Mammary epithelial cell (primary cell): ENCODE measurements at regions of chr9 and their contacts with region 1.

Region 1: DNA sequence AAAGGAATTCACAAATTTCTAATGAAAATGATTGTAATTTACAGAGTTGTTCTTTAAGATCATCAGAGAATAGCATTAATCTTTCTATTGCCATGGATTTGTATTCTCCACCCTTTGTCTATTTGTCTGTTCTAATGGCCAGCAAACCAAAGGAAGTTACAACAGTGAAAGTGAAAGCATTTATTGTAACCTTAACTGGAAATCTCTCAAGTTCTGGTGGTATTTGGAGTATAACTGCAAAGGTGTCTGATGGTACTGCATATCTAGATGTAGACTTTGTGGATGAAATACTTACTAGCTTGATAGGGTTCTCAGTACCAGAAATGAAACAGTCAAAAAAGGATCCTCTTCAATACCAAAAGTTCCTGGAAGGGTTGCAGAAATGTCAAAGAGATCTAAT is 21.7 kb downstream of the RMI1 start:
- DNase-seq: no peak
- H3K4me3 ChIP-seq: no peak overlapping the region
- H3K27ac ChIP-seq: no peak overlapping the region
- H3K4me1 ChIP-seq: peaks cover 4% of the 10 kb centered on the region
- H3K27me3 ChIP-seq: no peaks in the 10 kb centered on the region
- CTCF ChIP-seq: no peak

Region 2: DNA sequence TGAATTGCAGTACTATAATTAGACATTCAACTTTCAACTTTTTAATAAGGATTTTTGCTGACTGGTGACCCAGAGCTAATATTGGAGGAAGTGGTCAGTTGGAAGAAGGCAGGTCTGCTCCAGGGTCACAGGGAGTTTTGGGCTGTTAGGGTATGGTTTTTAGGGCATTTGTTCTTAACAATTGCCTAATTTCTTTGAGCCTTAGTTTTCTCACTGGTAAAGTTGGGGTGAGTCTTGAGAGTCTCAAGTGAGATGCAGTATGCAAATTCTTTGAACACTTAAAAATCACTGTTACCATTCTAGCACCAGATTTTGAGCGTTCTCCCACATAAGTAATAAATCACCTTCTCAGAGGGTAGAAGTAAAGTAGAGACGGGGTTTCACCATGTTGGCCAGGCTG is 29.2 kb after region 1 on chr9:
- CTCF ChIA-PET with region 1: no interaction called
- dilution Hi-C with region 1: loop called (anchors 5 kb)
- in situ Hi-C with region 1: no loop called
- intact Hi-C with region 1: no loop called
- DNase-seq: no peak
- H3K4me3 ChIP-seq: no peak overlapping the region
- H3K27ac ChIP-seq: no peak overlapping the region
- H3K4me1 ChIP-seq: no peaks in the 10 kb centered on the region
- H3K27me3 ChIP-seq: no peaks in the 10 kb centered on the region
- CTCF ChIP-seq: no peak

Region 3: DNA sequence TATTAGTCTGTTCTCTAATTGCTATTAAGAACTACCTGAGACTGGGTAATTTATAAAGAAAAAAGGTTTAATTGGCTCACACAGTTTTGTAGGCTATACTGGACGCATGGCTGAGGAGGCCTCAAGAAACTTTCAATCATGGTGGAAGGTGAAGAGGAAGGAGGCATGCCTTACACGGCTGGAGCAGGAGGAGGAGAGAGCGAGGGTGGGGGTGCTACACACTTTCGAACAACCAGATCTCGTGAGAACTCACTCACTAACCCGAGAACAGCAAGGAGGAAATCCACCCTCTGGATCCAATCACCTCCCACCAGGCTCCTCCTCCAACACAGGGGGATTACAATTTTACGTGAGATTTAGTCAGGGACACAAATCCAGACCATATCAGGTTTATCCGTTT is 68.2 kb after region 1 on chr9:
- CTCF ChIA-PET with region 1: no interaction called
- dilution Hi-C with region 1: loop called (anchors 5 kb)
- in situ Hi-C with region 1: no loop called
- intact Hi-C with region 1: no loop called
- DNase-seq: no peak
- H3K4me3 ChIP-seq: no peak overlapping the region
- H3K27ac ChIP-seq: no peak overlapping the region
- H3K4me1 ChIP-seq: no peaks in the 10 kb centered on the region
- H3K27me3 ChIP-seq: no peaks in the 10 kb centered on the region
- CTCF ChIP-seq: no peak

Region 4: GRCh38 chr9:84189904-84190303 is 187.6 kb after region 1 on chr9:
- CTCF ChIA-PET with region 1: no interaction called
- dilution Hi-C with region 1: no loop called
- in situ Hi-C with region 1: no loop called
- intact Hi-C with region 1: no loop called
- DNase-seq: no peak
- H3K4me3 ChIP-seq: no peak overlapping the region
- H3K27ac ChIP-seq: no peak overlapping the region
- H3K4me1 ChIP-seq: no peaks in the 10 kb centered on the region
- H3K27me3 ChIP-seq: peaks cover 5% of the 10 kb centered on the region
- CTCF ChIP-seq: no peak